ENCODE measurements at regions of chr16 and their contacts with region 1.

Region 1: GRCh38 chr16:58755989-58756649 is 22.0 kb upstream of the GOT2 start:
- DNase-seq: peak; percentile 93
- H3K4me3 Mint-ChIP-seq: peak overlapping the region; percentile 43
- H3K27ac Mint-ChIP-seq: peak overlapping the region; percentile 57
- H3K4me1 Mint-ChIP-seq: peaks cover 7% of the 10 kb centered on the region
- H3K27me3 Mint-ChIP-seq: peaks cover 1% of the 10 kb centered on the region

Region 2: DNA sequence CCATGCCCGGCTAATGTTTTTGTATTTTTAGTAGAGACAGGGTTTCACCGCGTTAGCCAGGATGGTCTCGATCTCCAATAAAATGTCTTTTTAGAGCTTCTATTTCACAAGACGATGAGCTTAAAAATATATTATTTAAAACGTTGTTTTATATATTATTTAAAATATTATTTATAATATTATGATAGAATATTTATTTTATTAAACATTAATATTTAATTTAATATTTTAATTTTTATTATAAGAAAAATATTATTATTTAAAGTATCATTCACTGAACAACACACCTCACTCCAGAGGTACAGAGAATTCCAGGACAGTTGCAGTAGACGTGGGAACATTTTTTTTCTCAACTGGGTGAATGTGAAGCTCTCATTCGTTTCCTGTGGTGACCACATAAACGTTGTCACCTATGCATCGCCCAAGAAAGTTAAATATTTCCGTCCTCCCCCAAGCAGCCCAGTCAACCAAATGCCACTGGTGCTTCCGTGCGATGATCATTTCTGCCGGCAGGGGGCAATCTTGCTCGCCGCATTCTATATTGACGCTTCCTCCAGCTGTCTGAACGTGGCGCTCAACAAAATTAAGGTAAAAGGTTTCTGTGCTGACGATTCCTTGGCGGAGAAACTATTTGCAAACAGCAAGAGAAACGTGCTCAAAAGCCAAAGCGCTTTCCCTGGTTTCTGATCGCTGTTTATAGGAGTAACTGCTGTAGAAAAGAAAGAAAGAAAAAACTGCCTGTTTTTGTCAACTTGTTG is 419.6 kb before region 1 on chr16:
- intact Hi-C with region 1: loop called (anchors 1 kb)
- DNase-seq: peak; percentile 96
- H3K4me3 Mint-ChIP-seq: peak overlapping the region; percentile 28
- H3K27ac Mint-ChIP-seq: no peak overlapping the region
- H3K4me1 Mint-ChIP-seq: peaks cover 6% of the 10 kb centered on the region
- H3K27me3 Mint-ChIP-seq: no peaks in the 10 kb centered on the region

Region 3: DNA sequence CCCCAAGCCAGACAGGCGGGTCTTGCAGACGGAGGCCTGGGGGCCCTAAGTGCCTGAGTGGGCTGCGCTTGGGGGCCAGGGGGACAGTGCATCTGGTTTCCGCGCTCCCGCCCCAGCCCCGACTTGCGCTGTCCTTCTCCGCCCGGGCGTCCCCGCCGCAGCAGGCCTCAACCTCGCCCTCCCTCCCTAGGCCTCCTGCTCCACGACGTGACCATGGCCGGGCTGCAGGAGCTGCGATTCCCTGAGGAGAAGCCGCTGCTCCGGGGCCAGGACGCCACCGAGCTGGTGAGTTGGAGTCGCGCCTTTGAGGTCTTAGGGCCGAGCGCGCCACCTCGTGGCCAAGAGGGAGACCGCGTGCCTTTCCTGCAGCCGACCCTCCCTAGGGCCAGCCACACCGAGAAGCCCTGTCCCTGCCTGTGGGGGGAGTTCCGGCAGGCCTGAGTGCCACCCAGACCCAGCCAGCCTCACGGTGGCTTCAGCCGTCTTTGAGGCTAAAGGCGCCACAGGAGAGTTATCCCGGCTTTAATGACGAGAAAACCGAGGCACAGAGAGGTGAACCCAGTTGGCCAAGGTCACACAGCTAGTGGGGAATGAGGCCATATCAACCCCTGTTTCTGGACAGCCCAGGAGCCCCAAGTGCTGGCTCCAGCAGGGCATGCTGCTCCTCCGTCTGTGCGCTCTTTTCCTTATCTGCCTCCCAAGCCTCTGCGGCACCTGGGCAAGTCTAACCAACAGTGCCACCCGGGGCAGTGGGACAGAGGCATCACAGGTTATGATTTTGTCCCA is 268.4 kb before region 1 on chr16:
- intact Hi-C with region 1: loop called (anchors 1 kb)
- DNase-seq: peak; percentile 91
- H3K4me3 Mint-ChIP-seq: no peak overlapping the region
- H3K27ac Mint-ChIP-seq: no peak overlapping the region
- H3K4me1 Mint-ChIP-seq: no peaks in the 10 kb centered on the region
- H3K27me3 Mint-ChIP-seq: peaks cover 2% of the 10 kb centered on the region

Region 4: GRCh38 chr16:58515125-58515870 is 240.8 kb before region 1 on chr16 and contains the start of gene SETD6:
- intact Hi-C with region 1: loop called (anchors 1 kb)
- DNase-seq: peak; percentile 96
- H3K4me3 Mint-ChIP-seq: peak within 1 kb of the TSS; percentile 94
- H3K27ac Mint-ChIP-seq: peak within 1 kb of the TSS; percentile 91
- H3K4me1 Mint-ChIP-seq: peaks cover 19% of the 10 kb centered on the region
- H3K27me3 Mint-ChIP-seq: no peaks in the 10 kb centered on the region
- total RNA-seq, gene SETD6: 33.4 and 34.4 TPM in 2 replicates

Region 5: GRCh38 chr16:58684354-58685083 is 71.6 kb before region 1 on chr16 and contains the start of gene SLC38A7:
- intact Hi-C with region 1: loop called (anchors 5 kb)
- DNase-seq: peak; percentile 93
- H3K4me3 Mint-ChIP-seq: peak within 1 kb of the TSS; percentile 92
- H3K27ac Mint-ChIP-seq: peak within 1 kb of the TSS; percentile 83
- H3K4me1 Mint-ChIP-seq: peaks cover 13% of the 10 kb centered on the region
- H3K27me3 Mint-ChIP-seq: peaks cover 2% of the 10 kb centered on the region
- total RNA-seq, gene SLC38A7: 7.8 and 10.8 TPM in 2 replicates

Region 6: DNA sequence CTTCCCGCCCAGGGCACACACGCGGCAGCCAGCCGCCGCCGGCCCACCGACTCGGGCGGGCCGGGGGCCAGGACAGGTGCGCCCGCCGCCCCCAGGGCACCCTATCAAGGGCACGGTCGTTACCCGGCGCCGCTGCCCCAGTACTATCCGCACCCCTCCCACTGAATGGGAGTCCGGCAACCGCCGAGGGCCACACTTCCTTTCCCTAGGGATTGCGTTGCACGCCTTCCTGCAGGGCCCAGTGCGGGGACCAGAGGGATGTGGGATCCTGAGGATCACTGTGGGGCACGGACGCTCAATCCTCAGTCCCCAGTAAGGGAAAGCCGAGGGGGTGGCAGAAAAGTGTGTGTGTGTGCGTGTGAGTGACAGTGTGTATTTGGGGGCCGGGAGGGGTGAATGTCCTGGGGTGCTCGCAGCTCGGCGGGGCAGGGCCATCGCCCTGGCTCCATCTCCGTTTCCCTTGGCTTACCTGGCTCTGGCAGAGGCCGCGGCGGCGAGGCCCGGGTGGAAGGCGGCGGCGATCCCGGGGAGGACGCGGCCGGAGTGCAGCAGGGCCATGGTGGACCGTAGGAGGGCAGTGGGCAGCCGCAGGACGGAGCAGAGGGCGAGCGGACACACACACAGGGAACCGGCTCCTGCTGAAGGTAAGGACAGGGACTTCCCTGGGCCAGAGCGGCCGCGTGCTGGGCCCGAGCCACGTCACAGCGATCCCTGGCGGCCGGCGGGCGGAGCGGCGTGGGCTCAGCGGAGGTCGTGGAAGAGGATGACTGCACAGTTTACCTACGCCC is 22.3 kb before region 1 on chr16 and contains the start of gene GOT2:
- intact Hi-C with region 1: loop called (anchors 1 kb)
- DNase-seq: peak; percentile 95
- H3K4me3 Mint-ChIP-seq: peak within 1 kb of the TSS; percentile 93
- H3K27ac Mint-ChIP-seq: peak within 1 kb of the TSS; percentile 98
- H3K4me1 Mint-ChIP-seq: peaks cover 17% of the 10 kb centered on the region
- H3K27me3 Mint-ChIP-seq: peaks cover 2% of the 10 kb centered on the region
- total RNA-seq, gene GOT2: 141 and 144 TPM in 2 replicates

Region 7: DNA sequence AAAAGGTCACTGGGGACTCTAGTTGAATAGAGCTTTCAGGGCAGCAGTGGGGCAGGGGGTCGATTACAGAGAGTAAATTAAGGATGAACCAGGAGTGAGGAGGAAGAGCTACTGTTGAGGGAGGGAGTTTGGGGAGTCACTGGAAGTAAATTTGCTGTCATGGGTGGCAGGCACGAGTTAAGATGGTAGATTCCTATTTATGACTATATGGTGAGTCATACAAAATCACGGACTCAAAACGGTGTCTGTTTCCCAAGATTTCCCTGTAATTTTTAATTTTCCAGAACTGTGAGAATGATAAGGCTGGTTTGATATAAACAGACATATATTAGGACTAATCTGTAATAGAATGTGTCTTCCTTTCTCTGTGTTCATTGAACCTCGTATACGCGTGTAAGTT is 265.6 kb after region 1 on chr16:
- intact Hi-C with region 1: no loop called
- DNase-seq: no peak
- H3K4me3 Mint-ChIP-seq: no peak overlapping the region
- H3K27ac Mint-ChIP-seq: no peak overlapping the region
- H3K4me1 Mint-ChIP-seq: no peaks in the 10 kb centered on the region
- H3K27me3 Mint-ChIP-seq: no peaks in the 10 kb centered on the region

Measured in activated CD4-positive, alpha-beta T cell treated with anti-CD3 and anti-CD28 coated beads, Interleukin-2, amount 10 ng/mL, durations not matched to agents 24 days and 14 days (primary cell).